ENCODE measurements at regions of chr17 and their contacts with region 1.

Region 1: GRCh38 chr17:57855391-57856035 is 5.7 kb upstream of the MRPS23 start:
- DNase-seq: no peak
- H3K4me3 ChIP-seq: no peak overlapping the region
- H3K27ac ChIP-seq: peak overlapping the region; percentile 14 to 89 (median 54)
- H3K4me1 ChIP-seq: peaks cover 2 to 57% (median 24%) of the 10 kb centered on the region in 3 donors
- H3K27me3 ChIP-seq: no peaks in the 10 kb centered on the region
- CTCF ChIP-seq: no peak
- POLR2A ChIP-seq: no peak

Region 2: DNA sequence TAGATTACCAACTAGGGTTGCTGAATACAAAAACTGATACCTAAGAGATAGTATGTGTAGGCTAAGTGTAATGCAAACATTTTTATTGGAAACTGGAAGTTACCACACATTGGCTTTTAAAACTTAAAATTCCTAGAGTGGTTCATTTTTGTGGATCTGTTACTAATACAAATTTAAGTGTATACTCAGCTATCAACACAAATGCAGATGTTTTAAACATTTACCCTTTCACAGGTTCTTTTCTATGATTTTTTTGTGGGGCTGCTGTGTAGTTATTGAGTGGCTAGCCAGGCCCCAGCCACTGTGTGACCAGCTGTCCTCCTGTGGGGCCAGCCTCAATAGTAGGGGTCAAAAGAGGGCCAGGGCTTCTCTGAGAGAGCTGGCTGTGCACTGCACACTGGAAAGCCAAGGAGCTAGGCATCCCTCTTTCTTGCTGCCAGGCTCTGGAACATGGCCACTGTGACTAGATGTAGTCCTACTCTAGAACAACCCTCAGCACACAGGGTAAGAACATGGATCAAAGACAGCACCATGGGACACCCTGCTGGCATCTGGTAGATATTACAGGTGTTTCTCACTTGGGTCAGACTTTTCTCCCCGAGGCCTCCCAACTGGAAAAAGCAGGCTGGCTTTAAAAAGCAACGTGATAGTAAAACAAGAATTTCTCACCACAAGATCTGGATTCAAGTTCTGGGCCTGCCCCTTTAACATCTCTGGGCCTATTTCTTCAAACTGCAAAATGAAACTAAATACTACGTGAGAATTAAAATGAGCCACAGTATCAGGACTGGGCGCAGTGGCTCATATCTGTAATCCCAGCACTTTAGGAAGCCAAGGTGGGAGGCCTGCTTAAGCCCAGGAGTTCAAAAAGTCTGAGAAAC is 139.8 kb after region 1 on chr17:
- intact Hi-C with region 1: loop called (anchors 5 kb)
- DNase-seq: no peak
- H3K4me3 ChIP-seq: no peak overlapping the region
- H3K27ac ChIP-seq: peak overlapping the region in 3 of 4 donors; percentile 48 to 58 (median 49)
- H3K4me1 ChIP-seq: peaks cover 0 to 43% (median 3%) of the 10 kb centered on the region in 3 donors
- H3K27me3 ChIP-seq: no peaks in the 10 kb centered on the region
- CTCF ChIP-seq: peak; percentile 55 to 83 (median 76)
- POLR2A ChIP-seq: no peak

Measured in esophagus squamous epithelium (tissue), 5 donors.